Natural killer cell (primary cell): ENCODE measurements at regions of chr18 and their contacts with region 1.

Region 1: DNA sequence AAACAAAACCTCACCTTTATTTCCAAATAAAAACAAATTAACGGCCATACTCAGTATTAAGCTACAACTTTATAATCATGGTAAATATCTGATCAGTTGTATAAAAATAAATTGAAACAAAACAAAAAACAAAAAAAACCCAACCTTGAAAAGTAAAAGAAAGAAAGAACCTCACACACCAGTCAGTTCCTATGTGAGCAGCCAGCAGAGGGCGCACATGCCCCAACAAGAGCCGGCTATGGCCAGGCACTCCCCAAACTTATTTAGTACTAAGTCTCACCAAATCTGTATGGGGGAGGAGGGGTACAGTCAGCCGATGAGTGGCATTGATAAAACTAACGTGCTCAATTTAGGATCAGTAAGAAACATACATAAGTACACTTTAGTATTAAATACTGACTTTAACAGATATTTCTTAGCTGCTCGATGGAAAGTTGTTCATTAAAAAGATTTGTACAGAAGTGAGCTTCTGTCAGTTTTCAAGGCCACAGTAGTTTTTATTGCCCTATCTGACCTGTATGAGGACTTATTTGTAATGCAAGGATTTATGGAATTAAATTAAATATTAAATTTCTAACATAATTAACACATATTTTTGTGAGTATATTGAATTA is 172.6 kb downstream of the TCF4 start:
- DNase-seq: peak; percentile 74 to 83
- ATAC-seq: peak; percentile 79 to 91 (median 82)
- H3K4me3 ChIP-seq: no peak overlapping the region
- H3K4me3 Mint-ChIP-seq: no peak overlapping the region
- H3K27ac ChIP-seq: no peak overlapping the region
- H3K27ac Mint-ChIP-seq: peak overlapping the region in 1 of 2 donors; percentile 20
- H3K4me1 ChIP-seq: no peaks in the 10 kb centered on the region
- H3K4me1 Mint-ChIP-seq: peaks cover 11 to 13% of the 10 kb centered on the region in 2 donors
- H3K27me3 ChIP-seq: no peaks in the 10 kb centered on the region
- H3K27me3 Mint-ChIP-seq: peaks cover 0 to 5% of the 10 kb centered on the region in 2 donors
- CTCF ChIP-seq: peak; percentile 97

Region 2: GRCh38 chr18:55522011-55522410 is 106.6 kb after region 1 on chr18:
- intact Hi-C with region 1: loop called (anchors 5 kb)
- DNase-seq: peak in 1 of 2 donors; percentile 9
- ATAC-seq: peak in 2 of 3 donors; percentile 34 to 37
- H3K4me3 ChIP-seq: no peak overlapping the region
- H3K4me3 Mint-ChIP-seq: no peak overlapping the region
- H3K27ac ChIP-seq: no peak overlapping the region
- H3K27ac Mint-ChIP-seq: no peak overlapping the region
- H3K4me1 ChIP-seq: no peaks in the 10 kb centered on the region
- H3K4me1 Mint-ChIP-seq: no peaks in the 10 kb centered on the region
- H3K27me3 ChIP-seq: no peaks in the 10 kb centered on the region
- H3K27me3 Mint-ChIP-seq: no peaks in the 10 kb centered on the region
- CTCF ChIP-seq: peak; percentile 40

Region 3: GRCh38 chr18:55650363-55650870 is 235.1 kb after region 1 on chr18:
- intact Hi-C with region 1: no loop called
- DNase-seq: no peak
- ATAC-seq: no peak
- H3K4me3 ChIP-seq: no peak overlapping the region
- H3K4me3 Mint-ChIP-seq: no peak overlapping the region
- H3K27ac ChIP-seq: no peak overlapping the region
- H3K27ac Mint-ChIP-seq: no peak overlapping the region
- H3K4me1 ChIP-seq: no peaks in the 10 kb centered on the region
- H3K4me1 Mint-ChIP-seq: no peaks in the 10 kb centered on the region
- H3K27me3 ChIP-seq: no peaks in the 10 kb centered on the region
- H3K27me3 Mint-ChIP-seq: peaks cover 7 to 9% of the 10 kb centered on the region in 2 donors
- CTCF ChIP-seq: no peak

Region 4: DNA sequence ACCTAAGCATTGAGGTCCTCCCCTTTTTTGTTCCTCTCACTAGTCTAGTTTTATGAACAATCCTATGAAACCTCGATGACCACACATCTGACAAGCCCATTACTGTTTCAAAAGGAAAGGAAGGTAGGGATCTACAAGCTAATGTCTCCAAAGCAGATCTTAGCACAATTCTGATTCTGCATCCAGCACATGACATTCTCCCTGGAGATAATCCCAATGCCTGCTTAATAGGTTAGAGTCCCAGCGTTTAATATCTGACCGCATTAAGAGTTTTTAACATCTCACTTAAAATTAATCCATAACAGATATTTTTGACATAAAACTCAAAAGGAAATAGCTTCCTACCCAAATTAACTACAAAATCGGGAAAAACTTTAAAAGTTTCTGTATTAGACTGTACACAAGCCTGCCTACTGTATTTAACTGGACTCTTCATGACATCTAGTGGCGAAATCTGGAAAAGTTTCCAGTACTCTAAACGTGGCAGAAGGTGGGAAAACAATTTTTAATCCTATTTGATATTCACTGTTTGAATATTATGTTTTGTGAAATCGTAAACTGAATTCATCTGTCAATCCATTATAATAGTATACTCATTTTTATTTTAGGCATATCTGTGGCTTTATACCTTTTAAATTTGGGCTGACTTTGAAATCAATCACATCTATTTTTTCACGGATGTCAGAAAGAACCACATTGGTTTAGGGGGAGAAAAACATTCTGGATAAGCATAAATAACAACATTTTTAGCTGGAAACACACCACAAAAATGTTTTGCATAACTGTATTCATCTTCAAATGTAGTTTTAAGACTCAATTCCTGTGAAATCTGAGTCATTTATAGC is 1160.7 kb after region 1 on chr18:
- intact Hi-C with region 1: loop called (anchors 1 kb)
- DNase-seq: peak in 1 of 2 donors; percentile 51
- ATAC-seq: peak in 2 of 3 donors; percentile 42 to 70
- H3K4me3 ChIP-seq: no peak overlapping the region
- H3K4me3 Mint-ChIP-seq: no peak overlapping the region
- H3K27ac ChIP-seq: no peak overlapping the region
- H3K27ac Mint-ChIP-seq: no peak overlapping the region
- H3K4me1 ChIP-seq: no peaks in the 10 kb centered on the region
- H3K4me1 Mint-ChIP-seq: peaks cover 10 to 20% of the 10 kb centered on the region in 2 donors
- H3K27me3 ChIP-seq: no peaks in the 10 kb centered on the region
- H3K27me3 Mint-ChIP-seq: peaks cover 3 to 26% of the 10 kb centered on the region in 2 donors
- CTCF ChIP-seq: peak; percentile 69